Sigmoid colon (tissue), 7 donors: ENCODE measurements at regions of chr19 and their contacts with region 1.

Region 1: GRCh38 chr19:47813304-47814004 is 8.3 kb upstream of the CRX start:
- DNase-seq: peak; percentile 73
- H3K4me3 ChIP-seq: no peak overlapping the region
- H3K27ac ChIP-seq: no peak overlapping the region
- H3K4me1 ChIP-seq: no peaks in the 10 kb centered on the region
- H3K27me3 ChIP-seq: peaks cover 0 to 4% (median 0%) of the 10 kb centered on the region in 3 donors
- CTCF ChIP-seq: peak in 2 of 4 experiments; percentile 8 to 52
- EP300 ChIP-seq: no peak
- POLR2A ChIP-seq: no peak

Region 2: DNA sequence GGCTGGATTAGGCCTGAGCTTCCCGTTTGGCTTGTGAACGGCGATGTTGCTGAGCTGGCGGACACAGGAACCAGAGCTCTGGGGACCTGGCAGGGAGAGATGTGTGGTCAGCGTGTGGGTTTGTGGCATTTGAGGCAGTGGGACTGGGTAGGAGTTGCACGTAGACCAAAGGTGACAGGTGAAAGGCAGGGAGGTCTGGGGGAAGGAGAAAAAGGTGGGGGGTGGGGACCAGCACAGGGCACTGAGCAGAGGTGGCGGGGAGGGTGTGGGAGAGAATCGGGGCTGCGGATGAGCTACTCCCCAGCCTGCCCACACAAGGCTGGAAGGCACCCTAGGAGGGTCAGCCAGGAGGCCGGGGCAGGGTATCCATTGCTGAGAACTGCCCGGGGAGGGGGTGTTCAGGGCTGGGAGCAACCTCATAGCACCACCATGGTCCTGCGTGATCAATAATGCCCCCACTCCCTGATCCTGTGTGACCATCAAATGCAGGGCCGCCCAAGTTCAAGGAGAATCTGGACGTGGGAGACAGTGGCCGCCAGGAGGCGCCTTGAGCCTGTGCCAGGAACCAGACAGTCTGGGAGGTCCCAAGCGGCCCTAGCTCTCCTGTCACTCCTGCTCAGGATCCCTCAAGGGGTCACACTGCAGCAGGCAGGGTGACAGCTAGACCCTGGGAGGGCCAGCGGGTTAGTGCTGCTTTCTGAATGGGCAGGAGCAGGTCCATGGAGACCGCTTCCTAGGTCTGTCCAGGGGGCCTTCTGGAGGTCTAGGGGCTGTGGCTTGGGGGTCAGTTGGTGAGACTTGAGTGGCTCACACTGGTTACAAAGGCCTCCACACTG is 47.7 kb before region 1 on chr19:
- intact Hi-C with region 1: no loop called
- DNase-seq: peak; percentile 81
- H3K4me3 ChIP-seq: no peak overlapping the region
- H3K27ac ChIP-seq: no peak overlapping the region
- H3K4me1 ChIP-seq: peaks cover 0 to 7% (median 3%) of the 10 kb centered on the region in 4 donors
- H3K27me3 ChIP-seq: no peaks in the 10 kb centered on the region
- CTCF ChIP-seq: peak; percentile 73 to 85 (median 78)
- EP300 ChIP-seq: no peak
- POLR2A ChIP-seq: no peak

Region 3: DNA sequence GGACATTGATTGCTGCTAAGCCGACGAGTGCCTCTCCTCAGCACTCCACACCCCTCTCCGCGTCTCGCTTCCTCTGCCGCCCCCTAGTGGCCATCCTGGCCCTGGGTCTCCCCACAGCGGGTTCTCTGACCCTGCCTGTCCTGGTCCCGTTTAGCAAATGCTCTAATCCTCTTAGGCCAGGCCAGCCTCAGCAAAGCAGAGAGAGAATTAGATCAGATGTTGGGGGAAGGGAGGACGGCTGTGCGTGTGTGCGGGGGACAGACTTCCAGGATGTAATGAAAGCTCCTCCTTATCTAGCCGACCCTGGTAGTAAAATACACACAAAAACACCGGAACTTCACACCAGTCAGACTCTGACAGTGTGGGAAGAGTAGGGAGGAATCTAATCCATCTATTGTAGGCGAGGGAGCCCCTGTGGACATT is 50.1 kb after region 1 on chr19:
- intact Hi-C with region 1: loop called (anchors 5 kb)
- DNase-seq: peak; percentile 87
- H3K4me3 ChIP-seq: no peak overlapping the region
- H3K27ac ChIP-seq: no peak overlapping the region
- H3K4me1 ChIP-seq: no peaks in the 10 kb centered on the region
- H3K27me3 ChIP-seq: peaks cover 0 to 17% (median 0%) of the 10 kb centered on the region in 3 donors
- CTCF ChIP-seq: peak; percentile 49 to 92 (median 70)
- EP300 ChIP-seq: no peak
- POLR2A ChIP-seq: no peak